ENCODE measurements at regions of chr1 and their contacts with region 1.

Region 1: DNA sequence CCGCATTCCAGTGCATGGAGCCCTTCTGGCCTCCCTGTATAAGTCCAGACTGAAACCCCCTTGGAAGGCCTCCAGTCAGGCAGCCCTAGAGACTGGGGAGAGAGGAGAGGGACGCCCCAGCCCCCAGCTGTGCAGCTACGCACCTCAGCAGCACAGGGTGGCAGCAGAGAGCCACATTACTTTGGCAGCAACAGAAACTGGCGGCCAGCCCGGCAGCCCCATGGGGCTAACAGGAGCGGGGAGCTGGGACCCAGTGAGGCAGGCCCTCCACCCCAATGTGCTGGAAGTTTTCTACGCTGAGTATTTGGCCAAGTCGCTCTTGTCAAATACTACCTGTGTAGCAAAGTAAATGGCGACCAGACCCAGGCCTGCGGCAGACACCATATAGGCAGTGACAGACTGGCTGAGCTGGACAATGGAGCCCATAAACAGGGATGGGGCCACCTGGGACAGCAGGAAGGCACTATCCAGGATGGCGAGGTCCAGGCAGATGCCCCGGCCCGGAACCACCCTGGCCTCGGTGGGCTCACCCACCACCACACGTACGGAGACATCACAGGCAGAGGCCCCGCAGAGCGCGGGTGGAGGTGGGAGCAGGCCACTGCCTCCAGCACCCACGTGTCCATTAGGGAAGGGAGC is 21.2 kb downstream of the SLC45A3 start:
- DNase-seq: peak; percentile 93
- H3K4me3 ChIP-seq: no peak overlapping the region; a peak in 1 of 4 replicates
- H3K27ac ChIP-seq: no peak overlapping the region
- H3K4me1 ChIP-seq: peaks cover 0 to 4% of the 10 kb centered on the region in 2 experiments; a peak in 1 of 4 replicates
- H3K27me3 ChIP-seq: no peaks in the 10 kb centered on the region
- CTCF ChIP-seq: peak; percentile 88
- EP300 ChIP-seq: no peak
- RAD21 ChIP-seq: peak; percentile 91

Region 2: DNA sequence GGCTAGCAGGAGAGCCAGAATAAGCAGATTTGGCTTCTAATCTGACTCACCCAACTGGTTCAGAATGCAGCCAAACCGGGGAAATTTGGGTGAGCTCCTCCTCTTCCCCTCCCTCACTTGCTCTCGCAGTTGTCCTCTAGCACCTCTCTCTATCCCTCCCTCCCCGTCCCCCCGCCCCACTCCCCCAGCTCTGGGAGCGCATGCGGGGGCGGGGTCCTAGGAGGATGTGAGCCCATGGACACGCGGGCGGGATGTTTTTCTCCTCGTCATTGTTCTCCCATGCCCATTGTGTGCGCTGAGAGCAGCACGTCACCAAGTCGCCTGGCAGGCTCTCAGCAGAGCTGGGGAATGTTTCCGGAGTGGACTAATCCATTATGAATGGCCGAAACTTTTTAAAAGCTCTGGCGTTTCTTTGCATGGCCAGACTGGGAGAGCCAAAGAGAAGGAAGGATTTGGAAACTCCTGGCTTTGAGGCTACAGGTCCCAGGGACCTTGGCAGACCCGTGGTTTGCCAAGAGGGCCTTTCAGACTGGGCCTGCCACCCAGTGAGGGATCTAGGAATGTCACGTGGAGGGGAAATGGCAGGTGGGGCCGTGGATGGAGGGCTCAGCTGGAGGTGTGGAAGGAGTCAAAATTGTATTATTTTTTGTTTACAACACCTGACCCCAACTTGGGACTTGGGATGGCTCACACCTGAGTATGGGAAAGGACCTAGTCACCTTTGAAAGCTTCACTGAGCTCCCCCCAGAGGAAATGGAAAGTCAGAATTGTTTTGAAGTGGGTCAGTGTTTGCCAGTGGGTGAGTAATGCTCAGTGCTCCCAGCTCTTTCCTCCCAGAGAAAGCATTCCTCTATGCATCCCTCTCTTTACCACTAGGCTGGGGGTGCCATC is 115.4 kb before region 1 on chr1:
- CTCF ChIA-PET with region 1: interaction called, 14 read pairs
- POLR2A ChIA-PET with region 1: no interaction called
- DNase-seq: peak; percentile 78
- H3K4me3 ChIP-seq: peak overlapping the region in 1 of 2 experiments; percentile 37; a peak in 2 of 4 replicates
- H3K27ac ChIP-seq: peak overlapping the region; percentile 23 to 88; a peak in 3 of 4 replicates
- H3K4me1 ChIP-seq: peaks cover 0 to 8% of the 10 kb centered on the region in 2 experiments; a peak in 1 of 4 replicates
- H3K27me3 ChIP-seq: no peaks in the 10 kb centered on the region
- CTCF ChIP-seq: no peak
- EP300 ChIP-seq: no peak
- RAD21 ChIP-seq: no peak

Region 3: GRCh38 chr1:205610036-205610435 is 49.0 kb before region 1 on chr1:
- CTCF ChIA-PET with region 1: interaction called, 13 read pairs
- POLR2A ChIA-PET with region 1: no interaction called
- DNase-seq: no peak
- H3K4me3 ChIP-seq: no peak overlapping the region
- H3K27ac ChIP-seq: peak overlapping the region; percentile 12 to 72; a peak in 2 of 4 replicates
- H3K4me1 ChIP-seq: peaks cover 5 to 24% of the 10 kb centered on the region in 2 experiments; a peak in 3 of 4 replicates
- H3K27me3 ChIP-seq: no peaks in the 10 kb centered on the region
- CTCF ChIP-seq: no peak
- EP300 ChIP-seq: no peak
- RAD21 ChIP-seq: no peak

Region 4: GRCh38 chr1:205700865-205701401 is 41.9 kb after region 1 on chr1:
- CTCF ChIA-PET with region 1: interaction called, 52 read pairs
- POLR2A ChIA-PET with region 1: interaction called, 3 read pairs
- DNase-seq: no peak
- H3K4me3 ChIP-seq: no peak overlapping the region
- H3K27ac ChIP-seq: no peak overlapping the region
- H3K4me1 ChIP-seq: peaks cover 0 to 5% of the 10 kb centered on the region in 2 experiments; a peak in 1 of 4 replicates
- H3K27me3 ChIP-seq: no peaks in the 10 kb centered on the region
- CTCF ChIP-seq: no peak
- EP300 ChIP-seq: no peak
- RAD21 ChIP-seq: no peak

Region 5: DNA sequence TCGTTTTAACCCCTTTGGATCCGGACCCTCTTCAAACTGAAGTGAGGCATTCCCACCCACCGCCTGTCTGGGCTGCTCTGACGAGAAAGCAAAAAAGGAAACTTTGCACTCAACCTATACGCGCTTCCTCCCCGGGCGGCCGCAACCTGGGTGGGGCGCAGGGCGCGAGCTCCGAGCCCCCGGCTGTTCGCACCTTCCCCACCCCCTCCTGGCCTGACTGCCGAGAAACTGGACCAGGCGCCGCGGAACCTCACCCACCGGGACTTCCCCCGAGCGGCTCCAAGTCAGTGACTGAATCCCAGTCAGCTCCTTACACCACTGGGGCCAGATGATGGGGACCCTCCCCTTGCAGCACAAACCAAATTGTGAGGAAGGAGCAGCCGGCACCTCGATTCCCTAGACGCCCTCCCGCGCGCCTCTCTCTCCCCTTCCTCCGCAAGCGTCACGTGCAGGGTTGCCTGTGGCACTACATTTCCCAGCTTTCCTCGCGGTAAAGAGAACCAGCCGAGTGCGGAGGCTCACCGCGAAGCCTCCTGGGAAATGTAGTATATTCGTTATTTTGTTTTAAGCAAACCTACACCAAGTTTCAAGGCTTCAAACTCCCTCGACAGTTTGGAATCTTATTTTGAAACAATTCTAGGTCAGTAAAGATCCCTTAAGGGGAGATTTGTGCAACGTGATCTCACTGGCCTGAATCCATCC is 116.1 kb after region 1 on chr1 and contains the start of gene RAB29:
- CTCF ChIA-PET with region 1: interaction called, 10 read pairs
- POLR2A ChIA-PET with region 1: no interaction called
- DNase-seq: peak; percentile 82
- H3K4me3 ChIP-seq: peak within 1 kb of the TSS; percentile 88 to 94
- H3K27ac ChIP-seq: no peak within 1 kb of the TSS; a peak in 1 of 4 replicates
- H3K4me1 ChIP-seq: peaks cover 0 to 6% of the 10 kb centered on the region in 2 experiments; a peak in 1 of 4 replicates
- H3K27me3 ChIP-seq: no peaks in the 10 kb centered on the region; the same call in 1 of the 2 replicates
- CTCF ChIP-seq: no peak
- EP300 ChIP-seq: no peak
- RAD21 ChIP-seq: no peak
- polyA plus RNA-seq, gene RAB29: 9.2 and 9.8 TPM in 2 replicates

Region 6: GRCh38 chr1:206030714-206031113 is 371.7 kb after region 1 on chr1:
- CTCF ChIA-PET with region 1: interaction called, 10 read pairs
- POLR2A ChIA-PET with region 1: no interaction called
- DNase-seq: peak; percentile 59
- H3K4me3 ChIP-seq: peak overlapping the region in 1 of 2 experiments; percentile 8; a peak in 1 of 4 replicates
- H3K27ac ChIP-seq: no peak overlapping the region
- H3K4me1 ChIP-seq: peaks cover 0 to 2% of the 10 kb centered on the region in 2 experiments; a peak in 1 of 4 replicates
- H3K27me3 ChIP-seq: peaks cover 16% of the 10 kb centered on the region; the same call in 1 of the 2 replicates
- CTCF ChIP-seq: peak; percentile 82
- EP300 ChIP-seq: no peak
- RAD21 ChIP-seq: peak; percentile 82